Caco-2 (cell line): ENCODE measurements at regions of chrX and their contacts with region 1.

Region 1: DNA sequence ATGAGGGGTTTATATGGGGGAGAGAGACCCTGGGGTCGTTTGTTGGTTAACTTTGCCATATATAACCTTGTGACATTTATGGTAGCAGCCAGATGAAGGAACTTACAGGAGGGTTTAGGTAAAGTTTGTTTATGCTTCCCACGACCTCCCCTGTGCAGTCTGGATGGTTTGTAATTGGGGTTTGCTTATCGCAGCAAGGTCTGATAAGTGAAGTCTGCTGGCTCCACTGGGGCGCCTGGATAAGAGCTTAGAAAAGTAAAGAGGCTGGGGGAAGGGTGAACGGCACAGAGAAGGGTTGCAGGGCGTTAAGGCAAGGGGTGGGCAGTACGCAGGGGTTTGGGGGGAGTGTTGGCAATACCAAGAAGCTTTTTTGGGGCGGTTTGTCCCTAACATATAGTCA is 98.7 kb downstream of the KDM6A start:
- DNase-seq: no peak
- H3K4me3 ChIP-seq: no peak overlapping the region
- H3K4me3 Mint-ChIP-seq: no peak overlapping the region
- H3K27ac Mint-ChIP-seq: no peak overlapping the region
- H3K4me1 ChIP-seq: 0 out of 2 replicates have a peak, but pooled peaks cover 2% of the 10 kb centered on the region
- H3K4me1 Mint-ChIP-seq: peaks cover 7% of the 10 kb centered on the region
- H3K27me3 ChIP-seq: no peaks in the 10 kb centered on the region
- H3K27me3 Mint-ChIP-seq: no peaks in the 10 kb centered on the region
- CTCF ChIP-seq: no peak

Region 2: DNA sequence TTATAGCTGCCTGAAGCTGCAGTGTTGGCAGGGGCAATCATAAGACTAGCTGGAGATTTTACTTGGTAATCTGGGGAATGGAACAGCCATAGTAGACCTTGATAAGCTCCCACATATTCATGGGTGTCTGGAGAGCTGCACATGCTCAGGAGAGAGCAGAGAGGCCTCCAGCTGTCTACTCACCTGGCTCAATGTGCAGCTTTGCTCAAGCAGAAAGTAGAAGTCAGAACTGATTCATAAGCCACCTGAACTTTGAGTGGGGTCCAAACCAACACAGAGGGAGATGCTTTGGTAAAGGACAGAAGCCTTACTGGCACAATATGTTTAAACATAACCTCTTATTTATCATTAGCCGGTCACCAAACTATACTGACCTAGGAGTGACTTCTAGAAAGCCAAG is 44.3 kb before region 1 on chrX:
- CTCF ChIA-PET with region 1: no interaction called
- POLR2A ChIA-PET with region 1: interaction called, 12 read pairs
- intact Hi-C with region 1: no loop called
- DNase-seq: no peak
- H3K4me3 ChIP-seq: no peak overlapping the region
- H3K4me3 Mint-ChIP-seq: no peak overlapping the region
- H3K27ac Mint-ChIP-seq: no peak overlapping the region
- H3K4me1 ChIP-seq: no peaks in the 10 kb centered on the region
- H3K4me1 Mint-ChIP-seq: peaks cover 14% of the 10 kb centered on the region
- H3K27me3 ChIP-seq: no peaks in the 10 kb centered on the region
- H3K27me3 Mint-ChIP-seq: no peaks in the 10 kb centered on the region
- CTCF ChIP-seq: no peak